ENCODE measurements at regions of chr3 and their contacts with region 1.

Region 1: DNA sequence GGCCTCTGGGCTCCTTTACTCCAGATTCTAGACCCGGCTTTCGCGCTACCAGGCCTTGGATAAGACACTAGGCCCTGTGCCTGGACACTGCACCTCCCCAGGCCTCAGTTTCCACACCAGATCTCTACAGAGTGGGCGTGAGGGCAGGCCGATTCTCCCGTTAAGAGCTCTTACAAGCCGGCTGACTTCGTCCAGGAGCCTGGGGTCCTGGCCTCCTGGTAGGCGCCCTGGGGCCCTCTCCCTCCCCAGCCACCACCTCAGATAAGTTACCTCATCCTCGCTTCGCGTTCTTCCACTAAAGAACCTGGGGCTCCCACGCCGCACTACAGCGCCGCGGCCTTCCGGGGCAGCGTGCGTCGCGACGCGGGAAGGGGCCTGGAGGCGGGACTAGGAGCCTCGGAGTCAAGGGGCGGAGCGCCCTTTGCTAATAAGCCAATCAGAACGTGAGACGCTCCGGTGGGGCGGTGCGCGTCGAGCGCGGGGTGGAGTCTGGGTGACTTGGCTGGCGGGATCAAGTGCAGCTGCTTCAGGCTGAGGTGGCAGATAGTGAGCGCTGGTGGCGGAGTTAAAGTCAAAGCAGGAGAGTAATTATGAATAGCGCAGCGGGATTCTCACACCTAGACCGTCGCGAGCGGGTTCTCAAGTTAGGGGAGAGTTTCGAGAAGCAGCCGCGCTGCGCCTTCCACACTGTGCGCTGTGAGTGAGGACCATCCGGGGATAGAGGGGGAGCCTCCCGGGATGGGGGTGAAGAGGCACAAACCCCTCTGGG is at the starts of genes EAF2 and IQCB1:
- DNase-seq: peak; percentile 88 to 98 (median 96)
- H3K4me3 ChIP-seq: peak within 1 kb of the TSS; percentile 44 to 96 (median 84)
- H3K27ac ChIP-seq: peak within 1 kb of the TSS in 41 of 59 donors; percentile 5 to 88 (median 56)
- H3K27me3 ChIP-seq: no peaks in the 10 kb centered on the region
- CTCF ChIP-seq: peak in 38 of 56 donors; percentile 4 to 57 (median 33)
- total RNA-seq, gene EAF2: 8.6 to 27.8 (median 18.3) TPM
- total RNA-seq, gene IQCB1: 13.0 to 33.0 (median 21.6) TPM

Region 2: GRCh38 chr3:121681792-121682191 is 153.1 kb before region 1 on chr3:
- intact Hi-C with region 1: no loop called
- DNase-seq: no peak
- H3K4me3 ChIP-seq: no peak overlapping the region
- H3K27ac ChIP-seq: no peak overlapping the region
- H3K27me3 ChIP-seq: no peaks in the 10 kb centered on the region
- CTCF ChIP-seq: no peak

Region 3: GRCh38 chr3:121749276-121750086 is 85.4 kb before region 1 on chr3 and contains the start of gene GOLGB1:
- intact Hi-C with region 1: loop called in 1 of 2 experiments (anchors 10 kb)
- DNase-seq: peak; percentile 83 to 98 (median 95)
- H3K4me3 ChIP-seq: peak within 1 kb of the TSS; percentile 43 to 99 (median 90)
- H3K27ac ChIP-seq: peak within 1 kb of the TSS in 58 of 59 donors; percentile 20 to 94 (median 83)
- H3K27me3 ChIP-seq: peaks cover 0 to 8% (median 0%) of the 10 kb centered on the region in 45 donors
- CTCF ChIP-seq: peak in 9 of 56 donors; percentile 7 to 28 (median 12)
- total RNA-seq, gene GOLGB1: 54.8 to 101 (median 75.7) TPM

Region 4: DNA sequence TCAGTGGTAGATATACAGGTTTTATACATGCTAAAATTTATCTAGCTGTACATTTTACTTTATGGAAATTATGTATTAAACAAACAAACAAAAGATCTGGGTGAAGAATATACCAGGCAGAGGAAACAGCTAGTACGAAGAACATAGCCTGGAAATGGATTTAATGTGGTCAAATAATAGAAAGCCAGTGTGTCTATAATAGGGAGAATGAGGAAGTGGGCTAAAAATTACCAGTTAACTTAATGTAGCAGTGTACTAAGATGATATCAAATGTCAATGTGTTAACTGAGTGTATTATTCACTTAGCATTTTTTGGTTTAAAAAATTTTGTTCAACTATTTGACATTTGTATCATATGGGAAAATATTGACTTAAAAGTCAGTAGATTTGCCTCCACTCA is 36.5 kb after region 1 on chr3:
- intact Hi-C with region 1: no loop called
- DNase-seq: no peak
- H3K4me3 ChIP-seq: no peak overlapping the region
- H3K27ac ChIP-seq: no peak overlapping the region
- H3K27me3 ChIP-seq: no peaks in the 10 kb centered on the region
- CTCF ChIP-seq: no peak

Measured in dorsolateral prefrontal cortex (tissue), 120 donors.